Ascending aorta (tissue), 2 donors: ENCODE measurements at regions of chr14 and their contacts with region 1.

Region 1: GRCh38 chr14:50599700-50600444 is 39.9 kb downstream of the ATL1 start:
- DNase-seq: no peak
- H3K4me3 ChIP-seq: no peak overlapping the region
- H3K27ac ChIP-seq: no peak overlapping the region
- H3K4me1 ChIP-seq: no peaks in the 10 kb centered on the region
- H3K27me3 ChIP-seq: no peaks in the 10 kb centered on the region
- CTCF ChIP-seq: peak in 2 of 3 experiments; percentile 55 to 63

Region 2: GRCh38 chr14:50363714-50364111 is 236.2 kb before region 1 on chr14:
- intact Hi-C with region 1: no loop called
- DNase-seq: no peak
- H3K4me3 ChIP-seq: peak overlapping the region; percentile 30 to 45
- H3K27ac ChIP-seq: peak overlapping the region; percentile 43 to 55
- H3K4me1 ChIP-seq: no peaks in the 10 kb centered on the region
- H3K27me3 ChIP-seq: no peaks in the 10 kb centered on the region
- CTCF ChIP-seq: no peak

Region 3: GRCh38 chr14:50714450-50715073 is 114.7 kb after region 1 on chr14:
- intact Hi-C with region 1: loop called (anchors 1 kb)
- DNase-seq: no peak
- H3K4me3 ChIP-seq: no peak overlapping the region
- H3K27ac ChIP-seq: no peak overlapping the region
- H3K4me1 ChIP-seq: no peaks in the 10 kb centered on the region
- H3K27me3 ChIP-seq: no peaks in the 10 kb centered on the region
- CTCF ChIP-seq: peak in 2 of 3 experiments; percentile 37 to 45

Region 4: GRCh38 chr14:50778721-50779483 is 179.0 kb after region 1 on chr14:
- intact Hi-C with region 1: loop called (anchors 1 kb)
- DNase-seq: no peak
- H3K4me3 ChIP-seq: no peak overlapping the region
- H3K27ac ChIP-seq: no peak overlapping the region
- H3K4me1 ChIP-seq: peaks cover 6 to 11% of the 10 kb centered on the region in 2 donors
- H3K27me3 ChIP-seq: no peaks in the 10 kb centered on the region
- CTCF ChIP-seq: no peak

Region 5: GRCh38 chr14:50860478-50861086 is 260.7 kb after region 1 on chr14:
- intact Hi-C with region 1: loop called (anchors 10 kb)
- DNase-seq: peak; percentile 51 to 92
- H3K4me3 ChIP-seq: peak overlapping the region; percentile 58 to 67
- H3K27ac ChIP-seq: peak overlapping the region; percentile 33 to 38
- H3K4me1 ChIP-seq: peaks cover 0 to 3% of the 10 kb centered on the region in 2 donors
- H3K27me3 ChIP-seq: no peaks in the 10 kb centered on the region
- CTCF ChIP-seq: peak; percentile 32 to 86 (median 73)